ENCODE measurements at regions of chr3 and their contacts with region 1.

Region 1: GRCh38 chr3:132253262-132253878 is 63.8 kb upstream of the ACP3 start:
- DNase-seq: peak in 1 of 2 donors; percentile 17
- H3K4me3 ChIP-seq: no peak overlapping the region
- H3K27ac ChIP-seq: no peak overlapping the region
- H3K4me1 ChIP-seq: no peaks in the 10 kb centered on the region
- H3K27me3 ChIP-seq: no peaks in the 10 kb centered on the region
- CTCF ChIP-seq: peak; percentile 44 to 66 (median 53)
- POLR2A ChIP-seq: no peak

Region 2: DNA sequence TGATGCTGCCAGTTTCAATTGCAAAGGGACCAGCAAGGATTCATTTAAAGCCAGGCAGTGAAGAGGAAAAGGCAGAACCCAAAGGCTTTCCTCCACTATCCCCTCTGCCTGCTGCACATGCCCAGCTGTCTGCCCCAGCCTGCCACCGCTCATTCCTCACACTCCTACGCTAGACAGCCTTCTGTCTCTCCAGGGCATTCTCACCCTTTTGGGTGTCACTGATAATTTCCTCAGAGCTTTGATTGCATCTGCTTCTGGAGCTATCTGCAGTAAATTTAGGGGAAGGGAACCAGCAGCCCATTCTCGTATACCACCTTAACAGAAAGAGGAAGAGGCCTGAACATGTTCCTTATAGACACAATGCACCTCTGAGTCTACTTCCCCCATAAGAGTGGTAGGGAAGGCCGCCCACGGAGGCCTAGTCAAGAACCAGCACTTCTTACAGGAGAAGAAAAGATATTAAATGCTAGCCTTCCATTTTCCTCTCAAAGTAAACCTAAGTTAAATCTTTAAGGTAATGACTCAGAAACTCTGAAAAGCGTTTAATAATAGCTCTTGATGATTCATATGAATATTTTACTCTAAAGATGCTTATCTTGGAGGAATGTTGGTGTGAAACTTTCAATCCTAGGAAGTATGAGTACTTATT is 850.9 kb before region 1 on chr3:
- intact Hi-C with region 1: no loop called
- DNase-seq: no peak
- H3K4me3 ChIP-seq: no peak overlapping the region
- H3K27ac ChIP-seq: no peak overlapping the region
- H3K4me1 ChIP-seq: no peaks in the 10 kb centered on the region
- H3K27me3 ChIP-seq: no peaks in the 10 kb centered on the region
- CTCF ChIP-seq: no peak
- POLR2A ChIP-seq: no peak

Region 3: DNA sequence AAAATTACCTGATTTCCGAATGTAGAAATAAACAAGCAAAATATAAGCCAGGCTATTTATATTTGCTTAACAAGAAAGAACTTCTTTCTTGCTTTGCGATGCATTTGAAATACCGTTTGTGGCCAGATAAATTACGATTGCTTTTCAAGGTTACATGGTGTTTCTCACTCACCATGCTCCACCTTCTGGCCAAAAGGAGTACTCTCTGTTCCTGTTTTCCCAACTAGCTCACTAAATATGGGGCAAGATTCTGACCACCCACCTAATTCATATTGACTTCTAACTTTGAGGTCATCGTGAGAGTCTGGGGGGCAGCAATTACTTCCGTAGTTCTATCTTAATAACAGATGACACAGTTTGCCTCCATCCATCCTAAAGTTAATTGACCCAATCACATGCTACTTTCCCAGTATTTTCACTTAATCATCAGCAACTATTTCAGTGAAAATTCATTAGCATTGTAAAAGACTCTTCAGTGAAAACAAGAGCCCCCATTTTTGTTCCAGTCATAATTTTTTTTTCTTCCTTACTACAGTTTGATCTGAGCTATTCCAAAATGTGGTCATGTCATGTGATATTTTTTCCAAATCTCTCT is 89.7 kb after region 1 on chr3:
- intact Hi-C with region 1: loop called (anchors 10 kb)
- DNase-seq: peak; percentile 21 to 39
- H3K4me3 ChIP-seq: no peak overlapping the region
- H3K27ac ChIP-seq: no peak overlapping the region
- H3K4me1 ChIP-seq: no peaks in the 10 kb centered on the region
- H3K27me3 ChIP-seq: no peaks in the 10 kb centered on the region
- CTCF ChIP-seq: peak; percentile 70 to 85 (median 74)
- POLR2A ChIP-seq: no peak

Measured in uterus (tissue), 4 donors.